ENCODE measurements at regions of chr1 and their contacts with region 1.

Region 1: DNA sequence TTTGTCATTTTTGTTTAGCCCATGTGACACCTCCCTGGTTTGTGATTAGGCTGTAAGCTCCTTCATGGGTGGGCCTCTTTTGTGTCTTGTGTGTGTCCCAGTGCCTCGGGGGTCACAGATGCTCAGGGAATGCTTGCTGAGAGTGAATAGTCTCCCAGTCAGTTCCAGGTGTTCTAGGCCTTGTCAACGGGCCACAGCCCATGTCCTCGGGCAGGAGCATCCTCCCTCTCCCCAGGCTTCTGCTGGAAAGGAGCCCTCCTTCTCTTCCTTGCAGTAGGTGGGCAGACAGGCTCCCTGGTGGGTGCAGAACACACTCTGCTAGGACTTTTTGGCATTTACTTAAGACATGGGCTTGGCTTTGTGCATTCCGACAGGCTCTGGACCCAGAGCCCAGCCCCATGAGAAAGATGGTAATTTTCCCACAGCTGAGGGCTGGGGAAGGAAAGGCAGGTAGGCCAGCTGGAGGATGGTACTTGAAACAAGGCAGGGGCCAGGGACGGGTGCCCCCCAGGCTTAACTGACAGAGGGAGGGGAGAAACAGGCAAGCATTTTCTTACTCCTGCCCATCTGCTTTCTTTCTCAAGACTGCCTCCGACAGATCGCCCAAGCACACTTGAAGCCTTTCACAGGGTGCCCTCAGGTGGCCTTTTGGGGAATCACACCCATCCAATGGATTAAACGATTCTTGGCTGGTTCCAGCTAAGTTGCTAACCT is 7.1 kb upstream of the CPLANE2 start:
- H3K4me3 Mint-ChIP-seq: no peak overlapping the region
- H3K27ac Mint-ChIP-seq: no peak overlapping the region
- H3K4me1 Mint-ChIP-seq: peaks cover 9% of the 10 kb centered on the region
- H3K27me3 Mint-ChIP-seq: no peaks in the 10 kb centered on the region

Region 2: GRCh38 chr1:16078925-16079656 is 165.0 kb before region 1 on chr1:
- intact Hi-C with region 1: loop called (anchors 2 kb)
- H3K4me3 Mint-ChIP-seq: peak overlapping the region; percentile 65
- H3K27ac Mint-ChIP-seq: no peak overlapping the region
- H3K4me1 Mint-ChIP-seq: peaks cover 5% of the 10 kb centered on the region
- H3K27me3 Mint-ChIP-seq: peaks cover 27% of the 10 kb centered on the region

Region 3: DNA sequence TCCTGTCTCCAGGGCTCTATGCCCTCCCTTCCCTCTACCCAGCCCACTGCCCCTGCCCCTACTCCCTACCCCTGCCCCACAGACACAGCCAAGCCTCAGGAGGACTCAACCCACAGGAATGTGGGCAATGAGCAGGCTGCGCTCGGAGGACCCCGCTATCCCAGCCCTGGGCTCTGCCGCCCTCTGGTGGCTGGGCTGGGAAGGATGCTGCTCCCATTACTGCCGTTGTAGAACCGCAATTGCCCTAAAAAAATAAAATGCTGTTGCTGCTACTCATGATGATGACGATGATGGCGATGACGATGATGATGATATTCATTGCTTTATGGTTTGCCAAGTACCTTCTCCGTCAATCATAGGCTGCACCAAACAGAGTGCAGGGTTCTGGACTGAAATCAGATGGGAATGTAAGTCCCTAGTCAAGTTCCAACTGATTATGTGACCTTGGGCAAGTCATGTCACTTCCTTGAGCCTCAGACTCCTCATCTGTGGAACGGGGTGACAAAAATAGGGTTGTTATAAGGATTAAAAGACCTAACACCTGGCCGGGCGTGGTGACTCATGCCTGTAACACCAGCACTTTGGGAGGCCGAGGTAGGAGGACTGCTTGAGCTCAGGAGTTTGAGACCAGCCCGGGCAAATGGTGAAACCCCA is 56.2 kb before region 1 on chr1:
- intact Hi-C with region 1: loop called (anchors 5 kb)
- H3K4me3 Mint-ChIP-seq: no peak overlapping the region
- H3K27ac Mint-ChIP-seq: no peak overlapping the region
- H3K4me1 Mint-ChIP-seq: peaks cover 14% of the 10 kb centered on the region
- H3K27me3 Mint-ChIP-seq: peaks cover 24% of the 10 kb centered on the region

Region 4: GRCh38 chr1:16206547-16207317 is 37.4 kb before region 1 on chr1:
- intact Hi-C with region 1: loop called (anchors 2 kb)
- H3K4me3 Mint-ChIP-seq: peak overlapping the region; percentile 94
- H3K27ac Mint-ChIP-seq: peak overlapping the region; percentile 93
- H3K4me1 Mint-ChIP-seq: peaks cover 15% of the 10 kb centered on the region
- H3K27me3 Mint-ChIP-seq: peaks cover 3% of the 10 kb centered on the region

Measured in dendritic cell treated with granulocyte-macrophage colony-stimulating factor and Interleukin-4, amounts not matched to agents 40 ng/mL and 50 ng/mL, for 4 days (primary cell).